PC-9 (cell line): ENCODE measurements at regions of chr7 and their contacts with region 1.

Region 1: DNA sequence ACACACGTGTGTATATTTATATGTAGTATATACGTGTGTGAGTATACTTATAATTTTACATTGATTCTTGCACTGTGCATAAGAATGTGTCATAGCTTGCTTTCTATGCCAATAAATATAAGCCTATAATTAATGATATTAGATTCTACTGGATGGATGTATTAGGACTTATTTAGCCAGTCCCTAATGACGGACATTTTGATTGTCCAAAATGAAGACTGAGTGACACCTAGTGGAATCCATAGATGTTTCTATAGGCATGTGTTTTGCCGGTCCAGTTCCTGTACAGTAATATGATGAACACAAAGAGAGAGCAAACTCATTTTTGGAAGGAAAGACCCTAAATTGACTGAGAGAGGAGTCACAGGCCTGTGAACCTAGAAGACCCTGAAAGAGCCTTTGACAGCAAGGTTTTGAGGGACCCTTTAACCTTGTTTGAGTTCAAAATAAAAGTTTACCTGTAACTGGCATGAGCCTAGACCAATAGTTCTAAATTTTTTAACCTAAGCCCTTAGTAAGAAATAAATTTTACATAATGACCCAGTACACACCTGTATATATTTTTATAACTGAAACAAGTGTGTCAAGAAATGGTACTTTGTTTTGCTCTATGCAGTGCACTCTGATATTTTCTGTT is 42.4 kb upstream of the AGBL3 start:
- DNase-seq: no peak
- H3K4me3 ChIP-seq: no peak overlapping the region
- H3K27ac ChIP-seq: no peak overlapping the region
- H3K4me1 ChIP-seq: peaks cover 23% of the 10 kb centered on the region
- H3K27me3 ChIP-seq: no peaks in the 10 kb centered on the region
- CTCF ChIP-seq: peak; percentile 72

Region 2: GRCh38 chr7:134632937-134633540 is 310.8 kb before region 1 on chr7:
- CTCF ChIA-PET with region 1: interaction called, 3 read pairs
- POLR2A ChIA-PET with region 1: no interaction called
- intact Hi-C with region 1: loop called (anchors 1 kb)
- DNase-seq: peak in 1 of 2 experiments; percentile 32
- H3K4me3 ChIP-seq: no peak overlapping the region
- H3K27ac ChIP-seq: no peak overlapping the region
- H3K4me1 ChIP-seq: peaks cover 6% of the 10 kb centered on the region
- H3K27me3 ChIP-seq: no peaks in the 10 kb centered on the region
- CTCF ChIP-seq: peak; percentile 83

Region 3: GRCh38 chr7:134684165-134684564 is 259.7 kb before region 1 on chr7:
- CTCF ChIA-PET with region 1: interaction called, 18 read pairs
- POLR2A ChIA-PET with region 1: no interaction called
- intact Hi-C with region 1: no loop called
- DNase-seq: no peak
- H3K4me3 ChIP-seq: no peak overlapping the region
- H3K27ac ChIP-seq: no peak overlapping the region
- H3K4me1 ChIP-seq: no peaks in the 10 kb centered on the region
- H3K27me3 ChIP-seq: no peaks in the 10 kb centered on the region
- CTCF ChIP-seq: no peak

Region 4: DNA sequence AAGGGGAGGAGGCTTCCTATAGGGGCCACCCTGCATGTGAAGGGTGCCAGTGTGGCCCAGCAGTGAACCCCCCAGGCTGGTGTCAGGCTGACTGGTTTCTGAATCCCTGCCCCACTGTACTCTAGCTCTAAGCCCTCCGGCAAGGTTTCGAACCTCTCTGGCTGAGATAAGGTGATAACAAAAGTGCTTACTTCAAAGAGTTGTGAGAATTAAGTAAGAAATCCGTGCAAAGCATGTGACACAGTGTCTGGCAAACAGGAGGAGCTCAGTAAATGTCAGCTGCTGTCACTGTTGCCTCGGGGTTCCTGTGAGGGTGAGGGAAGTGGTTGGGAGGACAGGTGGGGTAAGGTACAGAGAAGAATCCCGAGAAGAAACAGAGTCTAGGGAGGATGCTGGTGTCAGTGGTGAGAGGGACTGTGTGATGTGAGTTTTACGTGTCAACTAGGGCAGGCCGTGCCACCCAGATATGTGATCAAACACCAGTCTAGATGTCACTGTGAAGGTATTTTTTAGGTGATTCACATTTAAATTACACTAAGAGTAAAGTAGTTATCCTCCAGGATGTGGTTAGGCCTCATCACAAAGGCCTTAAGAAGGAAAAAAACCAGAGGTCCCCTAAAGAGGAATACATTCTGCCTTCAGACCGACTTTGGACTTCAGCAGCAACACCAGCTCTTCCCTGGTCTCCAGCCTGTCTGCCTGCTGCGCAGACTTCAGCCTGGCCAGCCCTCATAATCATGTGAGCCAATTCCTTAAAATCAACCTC is 232.8 kb before region 1 on chr7:
- CTCF ChIA-PET with region 1: no interaction called
- POLR2A ChIA-PET with region 1: interaction called, 3 read pairs
- intact Hi-C with region 1: loop called (anchors 5 kb)
- DNase-seq: no peak
- H3K4me3 ChIP-seq: no peak overlapping the region
- H3K27ac ChIP-seq: no peak overlapping the region
- H3K4me1 ChIP-seq: no peaks in the 10 kb centered on the region; the same call in 1 of the 2 replicates
- H3K27me3 ChIP-seq: no peaks in the 10 kb centered on the region
- CTCF ChIP-seq: no peak

Region 5: DNA sequence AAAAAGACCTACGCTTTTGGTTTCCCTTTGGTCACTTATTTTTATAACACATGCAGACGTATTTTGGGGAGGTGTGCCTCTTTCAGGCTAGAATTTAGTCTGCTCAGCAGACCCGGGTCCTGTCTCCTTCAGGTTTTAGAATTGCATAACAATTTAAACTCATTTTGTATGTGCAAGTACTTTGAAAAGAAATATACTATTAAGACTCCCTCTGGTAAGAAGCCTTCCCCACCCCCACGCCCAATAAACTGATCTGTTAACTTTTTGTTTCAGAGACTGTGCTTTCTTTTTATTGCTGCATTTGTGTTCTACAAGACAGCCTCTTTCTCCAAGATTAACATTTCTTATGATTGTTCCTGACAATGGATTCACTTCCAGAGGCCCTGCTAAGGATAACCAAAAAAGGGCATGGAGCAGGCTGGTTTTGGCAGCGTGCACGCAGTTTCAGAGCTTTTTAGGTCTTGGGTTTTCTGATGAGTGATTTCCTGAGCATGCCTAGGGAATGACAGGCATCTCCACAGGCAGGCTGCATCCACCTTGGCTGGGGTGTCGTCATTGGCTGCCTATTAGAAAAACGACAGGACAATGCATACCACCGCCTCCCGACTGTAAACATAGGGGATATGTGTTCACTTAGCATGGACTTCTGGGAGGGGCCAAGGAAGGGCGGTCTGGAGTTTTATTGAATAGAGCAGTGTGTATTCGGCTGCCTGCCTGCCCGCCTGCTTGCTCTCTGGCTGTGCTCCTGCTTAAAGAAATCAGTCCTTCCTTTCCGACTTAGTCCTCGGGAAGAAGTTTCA is 164.7 kb before region 1 on chr7 and contains the start of gene CALD1:
- CTCF ChIA-PET with region 1: no interaction called
- POLR2A ChIA-PET with region 1: no interaction called
- intact Hi-C with region 1: loop called (anchors 5 kb)
- DNase-seq: peak; percentile 90 to 96
- H3K4me3 ChIP-seq: peak within 1 kb of the TSS; percentile 56
- H3K27ac ChIP-seq: peak within 1 kb of the TSS; percentile 60
- H3K4me1 ChIP-seq: peaks cover 33% of the 10 kb centered on the region
- H3K27me3 ChIP-seq: no peaks in the 10 kb centered on the region
- CTCF ChIP-seq: no peak
- total RNA-seq, gene CALD1: 84.4 and 97.5 TPM in 2 replicates

Region 6: DNA sequence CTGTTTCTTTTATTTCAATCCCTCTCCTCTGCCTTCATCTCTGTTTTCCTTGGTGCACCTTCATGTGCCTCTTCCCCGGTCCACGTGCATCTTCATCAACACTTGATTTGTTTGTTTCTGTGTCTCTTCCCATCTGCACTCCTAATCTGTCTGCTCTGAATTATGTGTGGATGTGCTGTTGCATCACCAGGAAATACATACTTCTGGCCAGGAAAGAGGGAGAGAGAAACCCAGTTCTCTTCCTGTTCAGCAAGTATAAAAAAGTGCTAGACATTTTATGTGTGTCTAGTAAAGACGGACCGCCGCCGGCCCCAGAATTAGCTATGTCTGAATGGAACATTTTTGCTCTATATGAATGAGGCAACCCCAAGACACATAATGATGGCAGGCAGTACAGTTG is 70.6 kb before region 1 on chr7:
- CTCF ChIA-PET with region 1: no interaction called
- POLR2A ChIA-PET with region 1: no interaction called
- intact Hi-C with region 1: no loop called
- DNase-seq: no peak
- H3K4me3 ChIP-seq: no peak overlapping the region
- H3K27ac ChIP-seq: no peak overlapping the region
- H3K4me1 ChIP-seq: 0 out of 2 replicates have a peak, but pooled peaks cover 4% of the 10 kb centered on the region
- H3K27me3 ChIP-seq: no peaks in the 10 kb centered on the region
- CTCF ChIP-seq: no peak

Region 7: DNA sequence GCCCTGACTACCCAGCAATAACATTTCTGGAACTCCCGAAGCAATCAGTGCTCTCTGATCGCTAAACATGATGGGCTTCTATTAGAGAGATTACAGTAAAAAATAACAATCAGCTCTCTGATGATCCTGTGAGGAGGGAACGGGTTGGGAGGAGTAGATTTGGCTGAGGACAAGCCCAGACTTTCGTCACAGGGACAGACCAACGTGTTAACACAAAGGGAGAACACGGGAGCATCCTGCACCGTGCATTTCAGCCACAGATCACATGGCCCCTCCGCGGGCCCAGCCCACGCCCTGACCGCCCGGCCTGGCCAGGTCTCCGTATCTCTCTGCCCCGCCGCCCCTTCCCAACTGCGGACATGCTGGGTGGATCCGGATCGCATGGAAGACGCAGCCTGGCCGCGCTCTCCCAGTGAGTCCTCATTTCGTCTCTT is 52.6 kb before region 1 on chr7:
- CTCF ChIA-PET with region 1: no interaction called
- POLR2A ChIA-PET with region 1: no interaction called
- intact Hi-C with region 1: loop called (anchors 5 kb)
- DNase-seq: peak; percentile 85 to 89
- H3K4me3 ChIP-seq: peak overlapping the region; percentile 63
- H3K27ac ChIP-seq: peak overlapping the region; percentile 43
- H3K4me1 ChIP-seq: peaks cover 43% of the 10 kb centered on the region
- H3K27me3 ChIP-seq: no peaks in the 10 kb centered on the region
- CTCF ChIP-seq: no peak

Region 8: GRCh38 chr7:134986363-134987251 is 42.7 kb after region 1 on chr7 and contains the start of gene AGBL3:
- CTCF ChIA-PET with region 1: no interaction called
- POLR2A ChIA-PET with region 1: no interaction called
- intact Hi-C with region 1: no loop called
- DNase-seq: peak; percentile 88 to 96
- H3K4me3 ChIP-seq: peak within 1 kb of the TSS; percentile 75
- H3K27ac ChIP-seq: peak within 1 kb of the TSS; percentile 26
- H3K4me1 ChIP-seq: peaks cover 18% of the 10 kb centered on the region
- H3K27me3 ChIP-seq: no peaks in the 10 kb centered on the region
- CTCF ChIP-seq: peak; percentile 80
- total RNA-seq, gene AGBL3: 3.2 and 4.3 TPM in 2 replicates

Region 9: GRCh38 chr7:135001390-135002165 is 57.7 kb after region 1 on chr7:
- CTCF ChIA-PET with region 1: no interaction called
- POLR2A ChIA-PET with region 1: no interaction called
- intact Hi-C with region 1: no loop called
- DNase-seq: no peak
- H3K4me3 ChIP-seq: no peak overlapping the region
- H3K27ac ChIP-seq: no peak overlapping the region
- H3K4me1 ChIP-seq: no peaks in the 10 kb centered on the region
- H3K27me3 ChIP-seq: no peaks in the 10 kb centered on the region
- CTCF ChIP-seq: no peak